ENCODE measurements at regions of chr4 and their contacts with region 1.

Region 1: GRCh38 chr4:53015681-53016080 is 153.6 kb downstream of the RASL11B start:
- DNase-seq: peak in 1 of 3 donors; percentile 59
- ATAC-seq: peak in 1 of 2 donors; percentile 44
- H3K4me3 ChIP-seq: no peak overlapping the region
- H3K27ac ChIP-seq: no peak overlapping the region
- H3K4me1 ChIP-seq: peaks cover 6% of the 10 kb centered on the region
- H3K27me3 ChIP-seq: no peaks in the 10 kb centered on the region

Region 2: GRCh38 chr4:52617336-52618020 is 398.2 kb before region 1 on chr4:
- intact Hi-C with region 1: no loop called
- DNase-seq: no peak
- ATAC-seq: no peak
- H3K4me3 ChIP-seq: no peak overlapping the region
- H3K27ac ChIP-seq: no peak overlapping the region
- H3K4me1 ChIP-seq: no peaks in the 10 kb centered on the region
- H3K27me3 ChIP-seq: no peaks in the 10 kb centered on the region

Region 3: DNA sequence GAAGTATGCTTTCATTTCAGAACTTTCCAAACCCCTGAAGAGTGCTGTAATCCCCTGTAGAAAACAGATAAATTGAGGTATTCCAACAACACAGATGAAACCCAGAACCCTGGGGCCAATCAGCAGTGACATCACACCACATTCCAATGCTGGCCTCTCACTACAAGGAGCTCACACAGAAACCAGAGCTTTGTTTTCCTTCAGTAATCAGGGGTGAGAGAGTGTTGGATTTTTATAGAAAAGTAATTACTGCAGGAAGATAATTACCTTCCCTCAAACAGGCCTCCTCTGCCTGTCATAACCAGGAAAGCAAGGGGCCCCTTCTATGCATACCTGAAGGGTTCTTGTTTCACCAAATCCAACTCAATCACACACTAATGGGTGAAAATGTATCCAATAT is 104.0 kb after region 1 on chr4:
- intact Hi-C with region 1: loop called in 1 of 4 experiments (anchors 10 kb)
- DNase-seq: peak in 2 of 3 donors; percentile 33 to 49
- ATAC-seq: peak; percentile 45 to 47
- H3K4me3 ChIP-seq: no peak overlapping the region
- H3K27ac ChIP-seq: no peak overlapping the region
- H3K4me1 ChIP-seq: peaks cover 2% of the 10 kb centered on the region
- H3K27me3 ChIP-seq: no peaks in the 10 kb centered on the region

Region 4: GRCh38 chr4:53189011-53189410 is 173.3 kb after region 1 on chr4:
- intact Hi-C with region 1: loop called in 1 of 4 experiments (anchors 10 kb)
- DNase-seq: no peak
- ATAC-seq: no peak
- H3K4me3 ChIP-seq: no peak overlapping the region
- H3K27ac ChIP-seq: no peak overlapping the region
- H3K4me1 ChIP-seq: no peaks in the 10 kb centered on the region
- H3K27me3 ChIP-seq: no peaks in the 10 kb centered on the region

Region 5: GRCh38 chr4:53196882-53197771 is 181.4 kb after region 1 on chr4:
- intact Hi-C with region 1: loop called in 1 of 4 experiments (anchors 5 kb)
- DNase-seq: peak in 1 of 3 donors; percentile 9
- ATAC-seq: peak; percentile 61 to 77
- H3K4me3 ChIP-seq: no peak overlapping the region
- H3K27ac ChIP-seq: no peak overlapping the region
- H3K4me1 ChIP-seq: peaks cover 1% of the 10 kb centered on the region
- H3K27me3 ChIP-seq: no peaks in the 10 kb centered on the region